Activated T-helper 1 cell treated with anti-CD3 and anti-CD28 coated beads, Interleukin-12 subunit alpha, Interleukin-12 subunit beta, Interleukin-2, Interleukin-4 antibody, amounts not matched to agents 30 ng/mL and 10 ng/mL and 1 ng/mL, durations not matched to agents 14 hours and 24 hours and 36 hours (primary cell): ENCODE measurements at regions of chr3 and their contacts with region 1.

Region 1: DNA sequence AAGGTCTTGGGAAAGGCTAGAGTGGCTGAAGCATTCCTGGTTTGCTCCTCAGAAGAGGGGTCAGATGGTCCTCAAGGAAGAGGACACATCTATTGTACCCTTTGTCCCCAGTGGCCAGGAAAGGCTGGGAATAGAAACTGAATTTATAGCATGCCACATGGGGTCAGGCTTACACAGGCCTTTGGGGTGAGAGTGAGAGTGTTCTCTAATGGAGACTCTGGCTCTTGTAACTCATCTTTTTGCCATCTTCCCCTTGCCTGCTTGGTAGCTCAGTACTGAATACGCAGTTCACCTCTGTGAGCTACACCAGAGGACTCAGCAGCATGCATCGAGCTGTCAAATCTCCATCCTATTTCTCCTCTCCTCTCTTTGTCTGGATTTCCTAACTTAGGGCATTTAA is 87.5 kb downstream of the ATP2B2 start:
- DNase-seq: no peak
- H3K4me3 Mint-ChIP-seq: no peak overlapping the region
- H3K27ac Mint-ChIP-seq: no peak overlapping the region
- H3K4me1 Mint-ChIP-seq: no peaks in the 10 kb centered on the region
- H3K27me3 Mint-ChIP-seq: peaks cover 5% of the 10 kb centered on the region

Region 2: GRCh38 chr3:10738688-10739372 is 321.0 kb after region 1 on chr3:
- intact Hi-C with region 1: loop called (anchors 1 kb)
- DNase-seq: peak; percentile 61
- H3K4me3 Mint-ChIP-seq: no peak overlapping the region
- H3K27ac Mint-ChIP-seq: no peak overlapping the region
- H3K4me1 Mint-ChIP-seq: peaks cover 11% of the 10 kb centered on the region
- H3K27me3 Mint-ChIP-seq: peaks cover 17% of the 10 kb centered on the region